SK-N-SH (cell line): ENCODE measurements at regions of chr20 and their contacts with region 1.

Region 1: DNA sequence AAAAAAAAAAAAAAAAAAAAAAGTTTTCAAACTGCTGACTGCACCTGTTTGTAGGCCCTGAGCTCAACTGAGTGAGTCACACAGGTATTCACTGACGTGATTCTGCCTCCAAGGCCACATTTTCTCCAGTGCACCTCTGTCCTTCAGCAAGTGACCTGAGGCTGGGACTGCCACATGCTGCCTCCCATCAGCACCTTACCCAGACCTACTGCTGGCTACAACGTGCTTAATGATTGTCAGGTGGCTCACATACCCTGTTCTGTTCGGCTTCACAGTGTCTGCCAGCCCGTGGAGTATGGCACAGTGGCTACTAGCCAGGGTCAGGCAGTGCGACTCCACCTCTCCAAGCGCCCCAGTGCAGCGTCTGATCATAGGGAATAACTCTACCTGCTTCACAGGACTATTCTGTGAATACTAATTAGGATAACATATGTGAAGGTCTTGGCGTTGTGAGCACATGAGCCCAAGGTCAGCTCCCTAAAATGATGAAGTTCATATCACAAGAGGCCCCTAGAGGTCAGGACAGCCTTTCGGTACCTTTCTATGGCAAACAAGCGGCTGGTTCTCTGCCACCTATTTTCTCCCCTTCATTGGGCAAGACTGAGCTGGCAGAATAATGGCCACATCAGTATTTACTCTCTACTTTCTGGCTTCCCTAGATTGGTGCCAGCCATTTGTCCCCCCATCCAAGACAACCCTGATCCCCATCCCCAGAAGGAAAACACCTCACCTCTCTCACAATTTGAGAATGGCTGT is 28.1 kb downstream of the RIPOR3 start:
- DNase-seq: peak; percentile 56
- H3K4me3 ChIP-seq: no peak overlapping the region
- H3K27ac ChIP-seq: no peak overlapping the region; a peak in 1 of 4 replicates
- H3K4me1 ChIP-seq: peaks cover 0 to 5% of the 10 kb centered on the region in 2 experiments; a peak in 1 of 4 replicates
- H3K27me3 ChIP-seq: no peaks in the 10 kb centered on the region
- CTCF ChIP-seq: peak; percentile 27; the same call in 1 of the 2 replicates
- EP300 ChIP-seq: no peak
- RAD21 ChIP-seq: peak; percentile 73

Region 2: DNA sequence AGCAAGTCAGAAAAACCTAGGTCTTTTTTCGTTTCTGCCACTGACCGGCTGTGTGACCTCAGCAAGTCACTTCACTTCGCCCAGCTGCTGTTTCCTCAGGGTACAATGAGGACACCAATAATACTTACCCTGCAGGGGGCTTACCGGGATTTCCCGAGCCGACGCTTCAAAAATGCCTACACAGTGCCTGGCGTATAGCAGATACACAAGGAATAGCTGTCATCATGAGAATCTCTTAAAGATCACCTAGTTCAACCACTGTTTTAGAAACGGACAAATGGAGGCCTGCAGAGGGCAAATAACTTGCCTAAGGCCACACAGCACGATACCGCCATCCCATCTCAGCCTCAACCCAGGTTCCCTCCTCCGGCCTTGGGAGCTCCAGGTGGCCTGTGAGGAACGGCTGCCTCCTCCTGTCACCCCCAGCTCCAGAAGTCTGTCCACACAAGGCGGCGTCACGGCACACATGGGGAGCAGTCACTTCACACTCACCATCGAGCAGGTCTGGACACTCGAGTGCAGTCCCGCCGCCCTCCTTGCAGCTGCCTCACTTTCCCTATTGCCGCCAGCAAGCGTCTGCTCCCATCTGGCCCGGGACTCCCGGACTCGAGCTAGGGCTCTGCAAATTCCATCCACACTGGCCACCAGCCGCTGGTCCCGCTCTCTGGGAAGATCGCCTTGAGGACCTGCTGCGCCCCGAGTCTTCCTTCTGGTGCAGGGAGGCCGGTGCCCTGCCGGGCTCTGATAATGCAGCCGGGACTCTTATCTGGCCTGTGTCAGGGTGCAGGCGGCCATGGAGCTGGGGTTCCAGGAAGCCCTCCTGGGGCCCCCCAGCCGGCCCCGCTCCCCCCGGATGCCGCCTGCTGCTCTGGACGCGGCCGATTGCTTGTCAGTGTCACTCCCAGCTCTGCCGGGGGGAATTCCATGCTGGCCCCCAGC is 27.6 kb after region 1 on chr20 and contains the start of gene RIPOR3:
- CTCF ChIA-PET with region 1: interaction called, 10 read pairs
- POLR2A ChIA-PET with region 1: no interaction called
- DNase-seq: peak; percentile 67
- H3K4me3 ChIP-seq: peak within 1 kb of the TSS; percentile 23 to 33; a peak in 3 of 4 replicates
- H3K27ac ChIP-seq: no peak within 1 kb of the TSS
- H3K4me1 ChIP-seq: peaks cover 18 to 30% of the 10 kb centered on the region in 2 experiments
- H3K27me3 ChIP-seq: no peaks in the 10 kb centered on the region
- CTCF ChIP-seq: no peak
- EP300 ChIP-seq: no peak
- RAD21 ChIP-seq: no peak
- polyA plus RNA-seq, gene RIPOR3: 1.0 and 1.2 TPM in 2 replicates

Region 3: DNA sequence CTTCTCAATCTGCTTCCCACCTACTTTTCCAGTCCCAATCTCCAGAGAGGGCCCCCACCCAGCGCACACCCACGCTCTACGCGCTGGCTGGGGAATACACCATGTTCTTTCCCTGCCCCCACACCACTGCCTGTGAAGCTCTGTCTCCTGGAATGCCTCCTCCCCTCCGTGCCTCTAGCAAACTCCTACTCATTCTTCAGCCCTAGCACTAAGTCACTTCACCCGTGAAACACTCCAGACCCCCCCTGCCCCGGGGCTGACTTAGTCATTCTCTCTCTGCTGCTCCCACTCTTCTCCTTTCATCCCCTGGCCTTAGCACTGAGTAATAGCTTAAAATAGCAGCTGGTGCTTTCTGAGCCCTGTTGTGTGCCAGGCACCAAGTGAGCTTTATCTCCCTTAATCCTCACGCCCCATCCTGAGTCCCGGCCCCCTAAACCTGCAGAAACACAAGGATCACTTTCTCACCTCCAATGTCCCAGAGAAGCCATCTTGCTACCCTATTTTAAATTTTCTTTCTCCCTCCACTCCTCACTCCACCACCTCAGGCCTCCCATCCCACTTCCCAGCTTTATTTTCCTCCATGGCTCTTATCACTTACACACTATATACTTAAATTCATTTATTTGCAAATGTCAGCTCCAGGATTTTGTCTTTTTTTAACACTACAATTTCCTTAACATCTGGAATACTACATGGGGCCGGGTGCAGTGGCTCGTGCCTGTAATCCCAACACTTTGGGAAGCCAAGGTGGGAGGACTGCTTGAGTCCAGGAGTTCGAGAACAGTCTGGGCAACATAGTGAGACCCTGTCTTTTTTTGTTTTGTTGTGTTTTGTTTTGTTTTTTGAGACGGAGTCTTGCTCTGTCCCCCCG is 61.8 kb after region 1 on chr20:
- CTCF ChIA-PET with region 1: interaction called, 10 read pairs
- POLR2A ChIA-PET with region 1: no interaction called
- DNase-seq: peak; percentile 47
- H3K4me3 ChIP-seq: no peak overlapping the region
- H3K27ac ChIP-seq: peak overlapping the region in 1 of 2 experiments; percentile 66; a peak in 2 of 4 replicates
- H3K4me1 ChIP-seq: peaks cover 5 to 13% of the 10 kb centered on the region in 2 experiments; a peak in 3 of 4 replicates
- H3K27me3 ChIP-seq: no peaks in the 10 kb centered on the region
- CTCF ChIP-seq: no peak
- EP300 ChIP-seq: peak in 1 of 2 experiments; percentile 60; a peak in 1 of 4 replicates
- RAD21 ChIP-seq: no peak